Activated naive CD4-positive, alpha-beta T cell treated with anti-CD3 and anti-CD28 coated beads for 36 hours (primary cell): ENCODE measurements at regions of chr10 and their contacts with region 1.

Region 1: GRCh38 chr10:73413528-73414229 is at the start of gene ANXA7:
- DNase-seq: peak; percentile 96
- H3K4me3 Mint-ChIP-seq: peak within 1 kb of the TSS; percentile 95
- H3K27ac Mint-ChIP-seq: peak within 1 kb of the TSS; percentile 93
- H3K4me1 Mint-ChIP-seq: peaks cover 56% of the 10 kb centered on the region
- H3K27me3 Mint-ChIP-seq: peaks cover 5% of the 10 kb centered on the region
- total RNA-seq, gene ANXA7: 130 to 134 TPM

Region 2: GRCh38 chr10:73096449-73097304 is 317.0 kb before region 1 on chr10 and contains the start of gene P4HA1:
- CTCF ChIA-PET with region 1: no interaction called
- intact Hi-C with region 1: loop called (anchors 2 kb)
- DNase-seq: peak; percentile 96
- H3K4me3 Mint-ChIP-seq: peak within 1 kb of the TSS; percentile 83
- H3K27ac Mint-ChIP-seq: peak within 1 kb of the TSS; percentile 93
- H3K4me1 Mint-ChIP-seq: peaks cover 32% of the 10 kb centered on the region
- H3K27me3 Mint-ChIP-seq: no peaks in the 10 kb centered on the region
- total RNA-seq, gene P4HA1: 15.3 to 15.9 TPM

Region 3: DNA sequence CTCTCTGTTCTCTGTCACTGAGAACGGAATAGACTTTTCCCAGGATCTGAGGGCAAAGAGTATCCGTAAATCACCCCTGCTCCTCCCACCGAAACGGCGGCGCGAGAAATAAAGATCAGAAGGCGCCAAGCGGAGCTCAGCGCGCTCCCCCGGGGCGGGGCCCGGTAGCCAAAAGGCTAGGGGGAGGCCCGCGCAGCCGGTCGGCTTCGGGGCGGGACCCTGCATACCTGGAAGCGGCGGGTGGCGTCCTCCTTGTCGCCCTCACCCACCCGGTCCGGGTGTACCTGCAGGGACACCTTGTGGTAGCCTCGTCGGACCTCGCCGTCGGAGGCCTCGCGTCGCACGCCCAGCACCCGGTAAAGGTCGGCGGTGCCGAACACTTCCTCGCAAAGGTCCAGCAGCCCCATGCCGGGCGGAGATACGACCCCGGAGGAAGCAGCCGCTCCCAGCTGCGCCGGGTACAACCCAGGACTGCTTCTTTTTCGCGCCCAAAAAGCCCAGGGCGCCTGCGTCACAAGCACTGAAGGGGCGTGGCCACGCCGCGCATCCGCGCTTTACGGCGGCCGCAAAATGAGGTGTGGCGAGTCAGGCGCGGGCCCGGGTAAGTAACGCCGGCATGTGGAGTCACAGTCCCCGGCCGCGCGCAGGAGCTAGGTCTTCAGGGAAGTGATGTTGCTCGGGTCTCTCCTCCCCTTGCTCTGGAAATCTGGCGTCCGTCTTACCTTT is 166.7 kb before region 1 on chr10 and contains the start of gene DNAJC9:
- CTCF ChIA-PET with region 1: no interaction called
- intact Hi-C with region 1: loop called (anchors 1 kb)
- DNase-seq: peak; percentile 98
- H3K4me3 Mint-ChIP-seq: peak within 1 kb of the TSS; percentile 100
- H3K27ac Mint-ChIP-seq: peak within 1 kb of the TSS; percentile 97
- H3K4me1 Mint-ChIP-seq: peaks cover 67% of the 10 kb centered on the region
- H3K27me3 Mint-ChIP-seq: no peaks in the 10 kb centered on the region
- total RNA-seq, gene DNAJC9: 55.2 to 57.2 TPM

Region 4: GRCh38 chr10:73339436-73339835 is 74.2 kb before region 1 on chr10:
- CTCF ChIA-PET with region 1: no interaction called
- intact Hi-C with region 1: no loop called
- DNase-seq: no peak
- H3K4me3 Mint-ChIP-seq: no peak overlapping the region
- H3K27ac Mint-ChIP-seq: no peak overlapping the region
- H3K4me1 Mint-ChIP-seq: no peaks in the 10 kb centered on the region
- H3K27me3 Mint-ChIP-seq: no peaks in the 10 kb centered on the region

Region 5: DNA sequence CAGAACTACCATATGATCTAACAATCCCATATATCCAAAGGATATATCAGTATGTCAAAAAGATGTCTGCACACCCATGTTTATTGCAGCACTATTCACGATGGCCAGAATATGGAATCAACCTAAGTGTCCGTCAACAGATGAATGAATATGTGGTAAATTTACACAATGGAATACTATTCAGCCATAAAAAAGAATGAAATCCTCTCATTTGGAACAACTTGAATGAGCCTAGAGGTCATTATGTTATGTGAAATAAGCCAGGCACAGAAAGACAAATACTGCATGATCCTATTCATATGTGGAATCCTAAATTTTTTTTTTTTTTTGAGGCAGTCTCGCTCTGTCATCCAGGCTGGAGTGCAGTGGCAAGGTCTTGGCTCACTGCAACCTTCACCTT is 48.7 kb before region 1 on chr10:
- CTCF ChIA-PET with region 1: no interaction called
- intact Hi-C with region 1: no loop called
- DNase-seq: no peak
- H3K4me3 Mint-ChIP-seq: no peak overlapping the region
- H3K27ac Mint-ChIP-seq: no peak overlapping the region
- H3K4me1 Mint-ChIP-seq: peaks cover 6% of the 10 kb centered on the region
- H3K27me3 Mint-ChIP-seq: no peaks in the 10 kb centered on the region

Region 6: GRCh38 chr10:73448384-73448783 is 34.7 kb after region 1 on chr10:
- CTCF ChIA-PET with region 1: no interaction called
- intact Hi-C with region 1: no loop called
- DNase-seq: no peak
- H3K4me3 Mint-ChIP-seq: no peak overlapping the region
- H3K27ac Mint-ChIP-seq: no peak overlapping the region
- H3K4me1 Mint-ChIP-seq: no peaks in the 10 kb centered on the region
- H3K27me3 Mint-ChIP-seq: no peaks in the 10 kb centered on the region

Region 7: DNA sequence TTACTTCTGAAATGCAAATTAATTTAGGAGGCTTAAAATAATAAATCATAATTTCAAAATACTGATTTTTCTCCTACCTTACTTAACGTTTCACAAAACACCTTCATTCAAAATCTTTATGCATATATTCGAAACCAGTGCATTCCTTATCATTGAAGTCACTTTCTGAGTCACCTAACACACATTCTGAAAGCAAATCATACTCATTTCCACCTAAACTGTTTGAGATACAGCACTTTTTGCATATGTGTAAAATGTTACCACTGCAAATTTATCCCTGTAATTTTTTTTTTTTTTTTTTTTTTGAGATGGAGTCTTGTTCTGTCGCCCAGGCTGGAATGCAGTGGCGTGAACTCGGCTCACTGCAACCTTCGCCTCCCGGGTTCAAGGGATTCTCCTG is 66.5 kb after region 1 on chr10:
- CTCF ChIA-PET with region 1: no interaction called
- intact Hi-C with region 1: loop called (anchors 2 kb)
- DNase-seq: no peak
- H3K4me3 Mint-ChIP-seq: no peak overlapping the region
- H3K27ac Mint-ChIP-seq: no peak overlapping the region
- H3K4me1 Mint-ChIP-seq: peaks cover 31% of the 10 kb centered on the region
- H3K27me3 Mint-ChIP-seq: no peaks in the 10 kb centered on the region

Region 8: GRCh38 chr10:73584737-73585136 is 171.1 kb after region 1 on chr10:
- CTCF ChIA-PET with region 1: no interaction called
- intact Hi-C with region 1: no loop called
- DNase-seq: no peak
- H3K4me3 Mint-ChIP-seq: no peak overlapping the region
- H3K27ac Mint-ChIP-seq: no peak overlapping the region
- H3K4me1 Mint-ChIP-seq: no peaks in the 10 kb centered on the region
- H3K27me3 Mint-ChIP-seq: no peaks in the 10 kb centered on the region